ENCODE measurements at regions of chr14 and their contacts with region 1.

Region 1: GRCh38 chr14:23306410-23307145 is at the start of gene BCL2L2:
- DNase-seq: peak; percentile 74
- H3K4me3 ChIP-seq: peak within 1 kb of the TSS; percentile 77
- H3K27ac ChIP-seq: peak within 1 kb of the TSS; percentile 37
- H3K4me1 ChIP-seq: peaks cover 32% of the 10 kb centered on the region
- CTCF ChIP-seq: no peak
- total RNA-seq, gene BCL2L2: 7.2 and 8.6 TPM in 2 replicates

Region 2: DNA sequence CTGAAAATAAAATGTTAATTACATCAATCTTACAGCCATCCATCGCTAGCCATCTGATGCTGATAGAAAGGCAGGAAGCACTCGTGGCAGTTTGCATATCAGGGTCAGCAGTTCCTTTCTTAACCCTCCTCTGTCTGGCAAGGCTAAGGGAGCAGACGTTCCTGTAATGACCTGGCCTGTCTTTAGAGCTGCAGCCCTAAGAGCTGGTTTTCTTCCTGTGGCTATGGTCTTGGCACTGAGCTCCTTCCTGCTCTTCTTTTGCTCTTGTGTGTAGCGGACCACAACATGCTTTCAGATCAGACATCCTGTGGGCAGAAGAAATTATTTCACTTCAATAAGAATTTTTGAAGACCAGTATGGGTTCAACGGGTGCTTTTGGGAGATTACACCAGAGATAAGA is 887.9 kb before region 1 on chr14:
- CTCF ChIA-PET with region 1: no interaction called
- POLR2A ChIA-PET with region 1: no interaction called
- intact Hi-C with region 1: no loop called
- DNase-seq: peak; percentile 74
- H3K4me3 ChIP-seq: peak overlapping the region; percentile 26
- H3K27ac ChIP-seq: peak overlapping the region; percentile 78
- H3K4me1 ChIP-seq: peaks cover 61% of the 10 kb centered on the region
- CTCF ChIP-seq: no peak

Region 3: GRCh38 chr14:23286020-23286905 is 20.3 kb before region 1 on chr14 and contains the start of gene HOMEZ:
- CTCF ChIA-PET with region 1: interaction called, 3 read pairs
- POLR2A ChIA-PET with region 1: interaction called, 13 read pairs
- intact Hi-C with region 1: loop called (anchors 1 kb)
- DNase-seq: peak; percentile 98
- H3K4me3 ChIP-seq: peak within 1 kb of the TSS; percentile 91
- H3K27ac ChIP-seq: peak within 1 kb of the TSS; percentile 28
- H3K4me1 ChIP-seq: peaks cover 13% of the 10 kb centered on the region
- CTCF ChIP-seq: peak; percentile 27; the same call in 1 of the 2 replicates
- total RNA-seq, gene HOMEZ: 6.3 and 7.1 TPM in 2 replicates